ENCODE measurements at regions of chrX and their contacts with region 1.

Region 1: GRCh38 chrX:45801554-45801953 is 600.9 kb upstream of the DIPK2B start:
- DNase-seq: peak in 2 of 9 experiments; percentile 53 to 70
- ATAC-seq: peak; percentile 38
- H3K4me3 ChIP-seq: peak overlapping the region in 1 of 2 experiments; percentile 11
- H3K4me3 Mint-ChIP-seq: no peak overlapping the region
- H3K27ac ChIP-seq: no peak overlapping the region
- H3K27ac Mint-ChIP-seq: peak overlapping the region; percentile 27
- H3K4me1 ChIP-seq: peaks cover 10% of the 10 kb centered on the region
- H3K4me1 Mint-ChIP-seq: peaks cover 29% of the 10 kb centered on the region
- H3K27me3 ChIP-seq: no peaks in the 10 kb centered on the region
- H3K27me3 Mint-ChIP-seq: no peaks in the 10 kb centered on the region
- CTCF ChIP-seq: peak; percentile 36

Region 2: DNA sequence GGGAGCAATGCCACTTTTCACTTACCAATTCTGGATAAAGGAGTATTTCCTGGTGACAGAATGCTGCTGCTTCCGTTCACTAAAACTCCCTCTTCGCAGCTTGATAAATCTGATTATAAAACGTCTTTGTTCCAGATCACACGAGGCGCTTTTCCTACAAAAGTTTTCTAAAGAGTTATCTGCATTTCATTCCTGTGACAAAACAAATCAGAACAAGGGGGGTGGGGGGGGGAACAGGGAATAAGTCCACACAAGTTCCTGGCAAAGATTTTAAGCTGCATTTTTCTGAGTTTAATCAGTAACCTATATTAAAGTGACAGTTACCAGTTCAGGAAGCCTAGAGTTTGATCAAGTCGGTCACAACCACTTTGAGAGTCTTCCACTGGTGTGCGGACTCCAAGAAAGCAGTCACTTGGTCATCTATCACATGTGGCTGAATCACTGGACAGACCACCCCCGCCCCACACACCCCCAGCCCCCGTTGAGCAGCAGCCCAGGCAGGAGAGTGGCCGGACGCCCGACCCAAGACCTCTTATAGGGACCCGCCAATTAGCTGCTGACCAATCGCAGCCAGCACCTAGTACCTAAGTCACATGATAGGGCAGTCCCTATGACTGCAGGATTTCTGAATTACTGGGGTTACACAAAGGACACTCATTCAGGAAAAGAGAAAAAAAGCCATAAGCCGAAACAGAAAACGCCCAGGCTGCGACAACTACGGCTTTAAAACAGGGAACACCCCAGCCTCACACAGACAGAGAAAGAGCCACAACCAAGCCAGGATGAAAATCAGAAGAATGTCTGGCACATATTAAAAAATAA is 31.6 kb before region 1 on chrX:
- CTCF ChIA-PET with region 1: interaction called, 7 read pairs
- POLR2A ChIA-PET with region 1: interaction called, 31 read pairs
- intact Hi-C with region 1: loop called (anchors 2 kb)
- DNase-seq: peak in 5 of 9 experiments; percentile 3 to 76 (median 24)
- ATAC-seq: peak; percentile 19
- H3K4me3 ChIP-seq: peak overlapping the region; percentile 38 to 57
- H3K4me3 Mint-ChIP-seq: peak overlapping the region; percentile 95
- H3K27ac ChIP-seq: peak overlapping the region; percentile 41 to 81
- H3K27ac Mint-ChIP-seq: peak overlapping the region; percentile 97
- H3K4me1 ChIP-seq: peaks cover 23% of the 10 kb centered on the region
- H3K4me1 Mint-ChIP-seq: peaks cover 64% of the 10 kb centered on the region
- H3K27me3 ChIP-seq: no peaks in the 10 kb centered on the region
- H3K27me3 Mint-ChIP-seq: no peaks in the 10 kb centered on the region
- CTCF ChIP-seq: no peak

Region 3: GRCh38 chrX:45849253-45849862 is 47.8 kb after region 1 on chrX:
- CTCF ChIA-PET with region 1: interaction called, 13 read pairs
- POLR2A ChIA-PET with region 1: no interaction called
- intact Hi-C with region 1: loop called (anchors 1 to 2 kb)
- DNase-seq: peak in 3 of 9 experiments; percentile 9 to 61 (median 42)
- ATAC-seq: peak; percentile 39
- H3K4me3 ChIP-seq: peak overlapping the region; percentile 61 to 66
- H3K4me3 Mint-ChIP-seq: peak overlapping the region; percentile 93
- H3K27ac ChIP-seq: no peak overlapping the region
- H3K27ac Mint-ChIP-seq: peak overlapping the region; percentile 72
- H3K4me1 ChIP-seq: no peaks in the 10 kb centered on the region
- H3K4me1 Mint-ChIP-seq: peaks cover 14% of the 10 kb centered on the region
- H3K27me3 ChIP-seq: peaks cover 0 to 7% of the 10 kb centered on the region in 2 experiments
- H3K27me3 Mint-ChIP-seq: no peaks in the 10 kb centered on the region
- CTCF ChIP-seq: peak; percentile 36

Region 4: DNA sequence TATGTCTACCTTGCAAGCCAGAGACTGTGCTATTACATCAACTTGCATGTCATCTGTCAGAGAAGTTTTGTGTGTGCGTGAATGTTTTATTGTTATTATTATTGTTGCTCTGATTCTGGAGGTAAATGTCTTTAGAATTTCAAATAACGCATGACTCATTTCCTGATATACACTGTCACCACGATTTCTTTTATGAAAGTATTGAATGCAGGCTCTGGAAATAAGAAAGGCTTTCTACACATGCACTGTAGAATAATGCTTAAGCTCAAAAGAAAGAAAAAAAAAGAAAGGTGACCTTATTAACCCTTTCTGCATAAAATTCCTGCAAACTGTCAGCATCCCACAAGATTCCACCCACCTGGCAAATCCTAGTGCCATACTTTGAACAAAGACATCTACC is 110.8 kb after region 1 on chrX:
- CTCF ChIA-PET with region 1: no interaction called
- POLR2A ChIA-PET with region 1: no interaction called
- intact Hi-C with region 1: no loop called
- DNase-seq: no peak
- ATAC-seq: no peak
- H3K4me3 ChIP-seq: no peak overlapping the region
- H3K4me3 Mint-ChIP-seq: no peak overlapping the region
- H3K27ac ChIP-seq: no peak overlapping the region
- H3K27ac Mint-ChIP-seq: no peak overlapping the region
- H3K4me1 ChIP-seq: no peaks in the 10 kb centered on the region
- H3K4me1 Mint-ChIP-seq: no peaks in the 10 kb centered on the region
- H3K27me3 ChIP-seq: no peaks in the 10 kb centered on the region
- H3K27me3 Mint-ChIP-seq: no peaks in the 10 kb centered on the region
- CTCF ChIP-seq: no peak

Region 5: GRCh38 chrX:46408553-46409407 is 607.2 kb after region 1 on chrX:
- CTCF ChIA-PET with region 1: interaction called, 12 read pairs
- POLR2A ChIA-PET with region 1: no interaction called
- intact Hi-C with region 1: loop called in 1 of 2 experiments (anchors 2 kb)
- DNase-seq: peak; percentile 28 to 70 (median 64)
- ATAC-seq: no peak
- H3K4me3 ChIP-seq: no peak overlapping the region
- H3K4me3 Mint-ChIP-seq: no peak overlapping the region
- H3K27ac ChIP-seq: no peak overlapping the region
- H3K27ac Mint-ChIP-seq: no peak overlapping the region
- H3K4me1 ChIP-seq: no peaks in the 10 kb centered on the region
- H3K4me1 Mint-ChIP-seq: no peaks in the 10 kb centered on the region
- H3K27me3 ChIP-seq: no peaks in the 10 kb centered on the region
- H3K27me3 Mint-ChIP-seq: no peaks in the 10 kb centered on the region
- CTCF ChIP-seq: peak; percentile 60

Measured in CD8-positive, alpha-beta T cell (primary cell).